Common myeloid progenitor, CD34-positive (primary cell): ENCODE measurements at regions of chr10 and their contacts with region 1.

Region 1: DNA sequence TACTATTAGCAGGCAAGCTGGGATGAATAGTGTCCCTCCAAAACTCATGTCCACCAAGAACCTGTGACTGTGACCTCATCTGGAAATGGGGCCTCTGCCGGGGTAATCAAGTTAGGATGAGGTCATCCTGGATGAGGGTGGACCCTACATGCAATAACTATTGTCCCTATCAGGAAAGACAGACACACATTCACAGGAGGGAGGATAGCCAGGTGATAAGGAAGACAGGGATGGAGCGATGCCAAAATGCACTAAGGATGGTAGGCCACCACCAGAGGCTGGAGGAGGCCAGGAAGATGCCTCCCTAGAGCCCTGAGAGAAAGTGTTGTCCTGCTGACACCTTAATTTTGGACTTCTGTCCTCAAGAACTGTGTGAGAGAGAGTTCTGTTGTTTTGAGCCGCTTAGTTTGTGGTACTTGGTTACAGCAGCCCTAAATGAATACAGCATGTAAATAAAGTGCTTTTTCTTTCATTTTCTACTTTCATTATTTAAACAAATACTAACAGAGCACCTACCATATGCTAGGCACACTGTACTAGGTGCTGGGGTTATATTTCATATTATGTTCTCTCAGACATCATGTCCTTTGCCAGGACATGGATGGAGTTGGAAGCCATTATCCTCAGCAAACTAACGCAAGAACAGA is 111.9 kb downstream of the USP6NL start:
- DNase-seq: no peak
- H3K4me3 ChIP-seq: no peak overlapping the region
- H3K27ac ChIP-seq: no peak overlapping the region
- H3K4me1 ChIP-seq: no peaks in the 10 kb centered on the region
- H3K27me3 ChIP-seq: no peaks in the 10 kb centered on the region

Region 2: GRCh38 chr10:11197266-11197712 is 302.3 kb before region 1 on chr10:
- CTCF ChIA-PET with region 1: no interaction called
- POLR2A ChIA-PET with region 1: no interaction called
- DNase-seq: no peak
- H3K4me3 ChIP-seq: no peak overlapping the region
- H3K27ac ChIP-seq: peak overlapping the region in 1 of 2 experiments; percentile 36
- H3K4me1 ChIP-seq: peaks cover 2 to 36% (median 23%) of the 10 kb centered on the region in 4 experiments
- H3K27me3 ChIP-seq: no peaks in the 10 kb centered on the region

Region 3: GRCh38 chr10:11483201-11484148 is 16.1 kb before region 1 on chr10:
- CTCF ChIA-PET with region 1: interaction called, 10 read pairs
- POLR2A ChIA-PET with region 1: no interaction called
- DNase-seq: peak in 2 of 3 donors; percentile 48 to 53
- H3K4me3 ChIP-seq: no peak overlapping the region
- H3K27ac ChIP-seq: no peak overlapping the region
- H3K4me1 ChIP-seq: peaks cover 4 to 11% (median 7%) of the 10 kb centered on the region in 4 experiments
- H3K27me3 ChIP-seq: no peaks in the 10 kb centered on the region